Transverse colon (tissue), 4 donors: ENCODE measurements at regions of chr13 and their contacts with region 1.

Region 1: DNA sequence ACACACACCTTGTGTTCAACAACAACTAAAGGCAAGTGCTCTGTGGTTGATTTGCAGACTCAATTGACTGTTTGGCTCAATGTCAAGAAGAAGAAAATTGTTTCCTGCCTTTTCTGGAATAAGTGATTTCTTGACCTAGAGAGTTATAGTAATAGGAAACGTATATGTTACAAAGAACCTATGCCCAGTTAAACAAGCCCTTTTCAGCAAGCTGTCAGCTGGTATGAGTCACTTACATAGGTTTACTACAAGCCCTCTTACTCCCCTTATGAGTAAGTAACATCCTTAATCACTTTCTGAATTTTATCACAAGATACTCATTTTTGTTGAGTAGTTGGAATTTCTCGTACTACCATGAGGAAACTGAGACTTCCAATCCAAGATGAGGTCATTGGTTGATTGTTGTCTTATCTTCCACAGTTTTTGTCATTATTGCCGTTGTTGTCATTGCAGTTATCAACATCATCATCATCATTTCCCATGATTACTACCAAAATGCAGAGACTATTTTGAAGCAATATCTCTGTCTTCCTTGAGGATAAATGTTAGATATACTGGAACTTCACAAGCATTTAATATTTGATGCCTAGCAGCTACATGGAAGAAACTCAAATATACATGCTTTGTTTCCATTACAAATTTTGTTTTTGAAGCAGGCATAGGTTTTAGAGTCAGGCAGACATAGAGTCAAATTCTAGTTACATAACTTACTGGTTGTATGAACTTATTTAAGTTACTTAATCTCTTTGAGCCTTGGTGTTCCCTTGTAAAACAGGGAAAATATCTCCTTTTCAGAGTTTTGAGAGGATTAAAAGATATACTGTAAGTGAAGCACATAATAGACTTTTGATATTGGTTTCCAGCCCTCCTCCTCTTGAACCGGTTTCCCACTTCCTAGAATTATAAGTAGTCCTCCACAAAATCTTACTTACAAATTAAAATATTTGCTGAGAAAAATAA is 106.0 kb downstream of the RAP2A start:
- DNase-seq: no peak
- H3K4me3 ChIP-seq: no peak overlapping the region
- H3K27ac ChIP-seq: no peak overlapping the region
- H3K4me1 ChIP-seq: no peaks in the 10 kb centered on the region
- H3K27me3 ChIP-seq: no peaks in the 10 kb centered on the region
- CTCF ChIP-seq: no peak
- EP300 ChIP-seq: no peak
- POLR2A ChIP-seq: no peak

Region 2: GRCh38 chr13:98368019-98368418 is 828.1 kb after region 1 on chr13:
- in situ Hi-C with region 1: no loop called
- intact Hi-C with region 1: no loop called
- DNase-seq: no peak
- H3K4me3 ChIP-seq: no peak overlapping the region
- H3K27ac ChIP-seq: peak overlapping the region; percentile 4 to 60 (median 22)
- H3K4me1 ChIP-seq: peaks cover 0 to 10% (median 3%) of the 10 kb centered on the region in 4 donors
- H3K27me3 ChIP-seq: no peaks in the 10 kb centered on the region
- CTCF ChIP-seq: no peak
- EP300 ChIP-seq: no peak
- POLR2A ChIP-seq: no peak

Region 3: GRCh38 chr13:98419848-98420553 is 880.1 kb after region 1 on chr13:
- in situ Hi-C with region 1: no loop called
- intact Hi-C with region 1: loop called (anchors 5 kb)
- DNase-seq: no peak
- H3K4me3 ChIP-seq: no peak overlapping the region
- H3K27ac ChIP-seq: no peak overlapping the region
- H3K4me1 ChIP-seq: peaks cover 2 to 13% (median 12%) of the 10 kb centered on the region in 4 donors
- H3K27me3 ChIP-seq: no peaks in the 10 kb centered on the region
- CTCF ChIP-seq: no peak
- EP300 ChIP-seq: no peak
- POLR2A ChIP-seq: no peak